ENCODE measurements at regions of chr1 and their contacts with region 1.

Region 1: DNA sequence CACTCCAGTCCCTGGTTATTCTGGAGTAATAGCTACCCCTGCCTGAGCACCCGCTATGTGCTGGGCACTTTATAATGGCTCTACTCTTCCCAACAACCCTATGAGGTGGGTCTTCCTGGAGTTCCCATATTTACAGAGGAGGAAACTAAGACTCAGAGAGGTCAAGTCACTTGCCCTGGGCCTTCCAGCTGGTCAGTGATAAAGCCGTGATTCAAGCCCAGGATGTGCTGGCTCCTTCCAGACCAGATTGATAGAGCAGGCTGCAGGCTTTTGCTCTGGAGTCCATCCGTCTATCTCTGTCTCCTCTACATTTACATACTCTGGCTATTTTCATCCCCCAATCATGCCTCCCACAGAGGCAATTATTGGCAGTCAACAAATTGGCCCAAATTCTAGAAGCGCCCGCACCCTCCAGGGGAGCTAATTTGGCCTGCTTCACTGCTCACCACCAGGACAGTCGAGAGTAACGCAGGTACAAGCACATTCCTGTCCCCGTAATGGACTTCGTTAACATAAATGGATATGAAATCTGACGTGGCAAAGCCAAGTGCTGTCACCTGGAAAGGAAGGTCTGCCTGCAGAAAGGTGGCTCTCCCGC is 39.8 kb upstream of the SELENON start:
- DNase-seq: no peak
- H3K4me3 ChIP-seq: no peak overlapping the region
- H3K4me3 Mint-ChIP-seq: no peak overlapping the region
- H3K27ac Mint-ChIP-seq: no peak overlapping the region
- H3K4me1 ChIP-seq: no peaks in the 10 kb centered on the region
- H3K4me1 Mint-ChIP-seq: no peaks in the 10 kb centered on the region
- H3K27me3 ChIP-seq: no peaks in the 10 kb centered on the region
- H3K27me3 Mint-ChIP-seq: no peaks in the 10 kb centered on the region
- CTCF ChIP-seq: no peak

Region 2: GRCh38 chr1:25128121-25128621 is 632.0 kb before region 1 on chr1:
- CTCF ChIA-PET with region 1: no interaction called
- POLR2A ChIA-PET with region 1: no interaction called
- intact Hi-C with region 1: no loop called
- DNase-seq: no peak
- H3K4me3 ChIP-seq: no peak overlapping the region
- H3K4me3 Mint-ChIP-seq: no peak overlapping the region
- H3K27ac Mint-ChIP-seq: no peak overlapping the region
- H3K4me1 ChIP-seq: no peaks in the 10 kb centered on the region
- H3K4me1 Mint-ChIP-seq: no peaks in the 10 kb centered on the region
- H3K27me3 ChIP-seq: no peaks in the 10 kb centered on the region
- H3K27me3 Mint-ChIP-seq: no peaks in the 10 kb centered on the region
- CTCF ChIP-seq: no peak

Region 3: GRCh38 chr1:25476186-25477097 is 283.8 kb before region 1 on chr1:
- CTCF ChIA-PET with region 1: no interaction called
- POLR2A ChIA-PET with region 1: no interaction called
- intact Hi-C with region 1: loop called (anchors 5 kb)
- DNase-seq: no peak
- H3K4me3 ChIP-seq: no peak overlapping the region
- H3K4me3 Mint-ChIP-seq: no peak overlapping the region
- H3K27ac Mint-ChIP-seq: no peak overlapping the region
- H3K4me1 ChIP-seq: peaks cover 30% of the 10 kb centered on the region
- H3K4me1 Mint-ChIP-seq: peaks cover 13% of the 10 kb centered on the region
- H3K27me3 ChIP-seq: no peaks in the 10 kb centered on the region
- H3K27me3 Mint-ChIP-seq: no peaks in the 10 kb centered on the region
- CTCF ChIP-seq: no peak

Region 4: GRCh38 chr1:25743826-25744581 is 16.2 kb before region 1 on chr1:
- CTCF ChIA-PET with region 1: no interaction called
- POLR2A ChIA-PET with region 1: no interaction called
- intact Hi-C with region 1: no loop called
- DNase-seq: peak; percentile 45 to 47
- H3K4me3 ChIP-seq: no peak overlapping the region
- H3K4me3 Mint-ChIP-seq: no peak overlapping the region
- H3K27ac Mint-ChIP-seq: no peak overlapping the region
- H3K4me1 ChIP-seq: no peaks in the 10 kb centered on the region
- H3K4me1 Mint-ChIP-seq: no peaks in the 10 kb centered on the region
- H3K27me3 ChIP-seq: no peaks in the 10 kb centered on the region
- H3K27me3 Mint-ChIP-seq: no peaks in the 10 kb centered on the region
- CTCF ChIP-seq: peak in 1 of 2 experiments; percentile 43

Region 5: DNA sequence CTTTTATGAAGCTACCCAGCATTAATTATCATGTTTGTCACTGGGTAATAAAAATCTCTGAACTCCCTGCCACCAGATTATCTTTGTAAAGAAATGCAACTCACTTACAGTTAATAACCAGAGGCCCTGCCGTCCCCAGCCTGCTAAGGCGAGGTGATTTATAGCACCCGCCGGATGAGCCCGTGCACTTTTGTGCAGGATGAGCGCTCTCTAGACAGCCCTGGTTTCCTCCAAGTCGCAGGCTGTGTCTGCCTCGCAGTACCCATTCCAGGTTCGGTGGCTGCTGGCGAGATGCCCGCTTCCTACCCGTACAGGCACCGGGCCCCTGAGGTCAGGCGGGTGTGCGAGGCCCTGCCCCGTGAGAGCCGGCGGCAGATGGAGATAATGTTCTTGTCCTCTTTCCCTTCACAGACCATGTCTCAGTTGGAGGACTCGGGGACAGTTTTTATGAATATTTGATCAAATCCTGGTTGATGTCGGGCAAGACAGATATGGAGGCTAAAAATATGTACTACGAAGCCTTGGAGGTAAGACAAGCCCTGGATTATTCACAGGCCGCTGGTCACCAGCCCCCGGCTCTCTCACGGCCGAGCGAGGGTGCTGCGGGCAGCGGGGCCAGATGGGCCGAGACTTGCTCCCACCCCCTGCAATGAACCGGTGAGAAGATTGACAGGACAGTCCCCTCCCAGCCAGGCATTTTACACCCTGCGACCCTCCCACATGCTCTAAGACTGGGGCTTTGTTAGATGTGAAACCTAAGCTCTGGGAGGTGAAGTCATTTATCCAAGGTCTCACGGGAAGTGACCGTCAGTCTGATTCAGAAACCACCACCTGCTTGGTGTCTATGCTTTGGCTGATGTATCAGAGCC is 11.3 kb after region 1 on chr1:
- CTCF ChIA-PET with region 1: no interaction called
- POLR2A ChIA-PET with region 1: no interaction called
- intact Hi-C with region 1: no loop called
- DNase-seq: peak; percentile 35 to 70
- H3K4me3 ChIP-seq: no peak overlapping the region
- H3K4me3 Mint-ChIP-seq: no peak overlapping the region
- H3K27ac Mint-ChIP-seq: peak overlapping the region; percentile 73
- H3K4me1 ChIP-seq: peaks cover 57% of the 10 kb centered on the region
- H3K4me1 Mint-ChIP-seq: peaks cover 48% of the 10 kb centered on the region
- H3K27me3 ChIP-seq: no peaks in the 10 kb centered on the region
- H3K27me3 Mint-ChIP-seq: no peaks in the 10 kb centered on the region
- CTCF ChIP-seq: no peak